AG04450 (cell line): ENCODE measurements at regions of chr4 and their contacts with region 1.

Region 1: DNA sequence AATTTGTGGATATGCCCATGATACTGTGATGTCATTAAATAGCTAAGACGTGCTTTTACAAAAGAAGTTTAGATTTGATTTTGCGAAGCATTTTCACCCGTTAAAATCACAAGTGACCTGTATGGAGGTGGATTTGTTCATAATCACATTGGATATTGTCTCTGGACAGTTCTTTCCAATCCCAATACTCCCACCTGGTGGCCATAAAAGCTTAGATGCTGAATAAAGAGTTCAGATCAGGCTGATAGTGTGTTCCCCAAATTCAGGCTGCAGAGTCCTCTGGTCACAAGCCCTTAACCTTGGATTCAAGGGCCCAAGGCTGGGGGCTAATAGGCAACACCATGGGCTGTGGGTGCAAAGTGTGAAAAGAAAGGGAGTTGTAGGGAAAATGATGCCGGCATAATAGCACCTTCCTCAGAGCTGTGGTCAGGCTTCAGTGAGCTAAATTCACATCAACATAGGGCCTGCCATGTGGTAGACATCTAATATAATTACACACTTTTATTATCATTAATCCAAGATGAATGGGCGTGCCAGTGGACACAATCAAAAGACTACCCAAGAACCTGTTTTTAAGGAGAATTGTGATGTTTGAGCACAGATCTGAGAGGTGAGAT is 28.1 kb downstream of the SMIM43 start:
- DNase-seq: no peak
- H3K4me3 ChIP-seq: no peak overlapping the region
- H3K27ac ChIP-seq: no peak overlapping the region
- H3K27me3 ChIP-seq: no peaks in the 10 kb centered on the region
- CTCF ChIP-seq: peak; percentile 68

Region 2: GRCh38 chr4:121370729-121371325 is 366.0 kb before region 1 on chr4:
- CTCF ChIA-PET with region 1: interaction called, 27 read pairs
- POLR2A ChIA-PET with region 1: no interaction called
- DNase-seq: peak; percentile 1
- H3K4me3 ChIP-seq: no peak overlapping the region
- H3K27ac ChIP-seq: no peak overlapping the region
- H3K27me3 ChIP-seq: no peaks in the 10 kb centered on the region
- CTCF ChIP-seq: peak; percentile 65

Region 3: GRCh38 chr4:121484633-121485032 is 252.2 kb before region 1 on chr4:
- CTCF ChIA-PET with region 1: interaction called, 30 read pairs
- POLR2A ChIA-PET with region 1: no interaction called
- DNase-seq: peak; percentile 21
- H3K4me3 ChIP-seq: no peak overlapping the region
- H3K27ac ChIP-seq: no peak overlapping the region
- H3K27me3 ChIP-seq: no peaks in the 10 kb centered on the region
- CTCF ChIP-seq: peak; percentile 88

Region 4: GRCh38 chr4:121675715-121676114 is 61.1 kb before region 1 on chr4:
- CTCF ChIA-PET with region 1: interaction called, 10 read pairs
- POLR2A ChIA-PET with region 1: no interaction called
- DNase-seq: no peak
- H3K4me3 ChIP-seq: no peak overlapping the region
- H3K27ac ChIP-seq: no peak overlapping the region
- H3K27me3 ChIP-seq: no peaks in the 10 kb centered on the region
- CTCF ChIP-seq: peak; percentile 56

Region 5: GRCh38 chr4:121726642-121727268 is 10.1 kb before region 1 on chr4:
- CTCF ChIA-PET with region 1: interaction called, 15 read pairs
- POLR2A ChIA-PET with region 1: no interaction called
- DNase-seq: no peak
- H3K4me3 ChIP-seq: no peak overlapping the region
- H3K27ac ChIP-seq: no peak overlapping the region
- H3K27me3 ChIP-seq: no peaks in the 10 kb centered on the region
- CTCF ChIP-seq: peak; percentile 75

Region 6: GRCh38 chr4:121764707-121765593 is 28.1 kb after region 1 on chr4 and contains the start of gene SMIM43:
- CTCF ChIA-PET with region 1: interaction called, 11 read pairs
- POLR2A ChIA-PET with region 1: no interaction called
- DNase-seq: no peak
- H3K4me3 ChIP-seq: peak within 1 kb of the TSS; percentile 69
- H3K27ac ChIP-seq: no peak within 1 kb of the TSS
- H3K27me3 ChIP-seq: no peaks in the 10 kb centered on the region
- CTCF ChIP-seq: no peak
- polyA plus RNA-seq, gene SMIM43: 6.0 and 7.4 TPM in 2 replicates